ENCODE measurements at regions of chr1 and their contacts with region 1.

Region 1: DNA sequence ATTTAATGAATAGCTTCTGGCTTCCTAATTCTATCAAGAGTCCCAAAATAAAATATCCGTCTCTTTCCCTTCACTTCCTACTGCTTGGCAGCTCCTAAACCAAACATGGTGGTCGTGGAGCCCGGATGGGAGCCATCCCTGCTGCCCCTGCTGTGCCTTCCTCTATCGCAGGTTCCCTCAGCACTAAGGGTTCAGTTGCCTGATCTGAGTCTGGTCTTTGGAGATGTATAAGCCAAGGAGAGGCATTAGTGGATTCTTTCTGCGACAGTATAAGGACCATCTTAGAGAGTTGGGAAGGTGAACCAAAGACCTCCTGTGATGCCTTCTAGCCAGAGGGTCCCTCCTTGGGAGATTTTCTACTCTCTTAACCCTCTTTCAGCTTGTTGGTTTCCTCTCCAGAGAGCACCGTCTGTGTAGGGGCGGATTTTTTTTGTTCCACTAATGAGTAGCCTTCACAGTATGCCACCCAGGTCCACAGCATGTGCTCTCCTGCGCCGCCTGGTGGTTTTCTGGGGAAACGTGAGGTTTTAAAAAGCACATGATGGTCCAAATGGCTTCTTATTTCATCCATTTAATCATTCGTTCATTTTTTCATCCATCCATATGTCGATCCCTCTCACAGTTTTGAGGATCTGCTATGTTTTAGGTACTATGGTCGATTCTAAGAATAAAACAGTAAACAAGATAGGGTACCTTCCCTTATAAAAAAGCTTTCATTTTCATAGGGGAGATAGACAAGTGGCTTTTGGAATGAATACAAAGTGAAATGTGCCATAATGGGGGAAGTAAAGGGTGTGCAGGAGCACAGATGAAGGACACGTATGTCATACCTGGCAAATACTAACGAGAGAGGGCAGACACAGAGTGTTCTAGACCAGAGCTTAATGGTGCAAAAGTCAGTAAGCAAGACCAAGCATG is 71.0 kb downstream of the NFASC start:
- DNase-seq: peak; percentile 83
- H3K4me3 Mint-ChIP-seq: no peak overlapping the region
- H3K27ac Mint-ChIP-seq: no peak overlapping the region
- H3K4me1 Mint-ChIP-seq: no peaks in the 10 kb centered on the region
- H3K27me3 Mint-ChIP-seq: peaks cover 6% of the 10 kb centered on the region

Region 2: GRCh38 chr1:204826970-204827369 is 114.7 kb before region 1 on chr1:
- CTCF ChIA-PET with region 1: interaction called, 3 read pairs
- intact Hi-C with region 1: loop called (anchors 1 kb)
- DNase-seq: peak; percentile 59
- H3K4me3 Mint-ChIP-seq: no peak overlapping the region
- H3K27ac Mint-ChIP-seq: no peak overlapping the region
- H3K4me1 Mint-ChIP-seq: peaks cover 5% of the 10 kb centered on the region
- H3K27me3 Mint-ChIP-seq: peaks cover 33% of the 10 kb centered on the region

Region 3: GRCh38 chr1:204896787-204897469 is 44.8 kb before region 1 on chr1:
- CTCF ChIA-PET with region 1: interaction called, 10 read pairs
- intact Hi-C with region 1: no loop called
- DNase-seq: no peak
- H3K4me3 Mint-ChIP-seq: no peak overlapping the region
- H3K27ac Mint-ChIP-seq: no peak overlapping the region
- H3K4me1 Mint-ChIP-seq: no peaks in the 10 kb centered on the region
- H3K27me3 Mint-ChIP-seq: peaks cover 15% of the 10 kb centered on the region

Region 4: GRCh38 chr1:204924013-204924967 is 17.4 kb before region 1 on chr1:
- CTCF ChIA-PET with region 1: interaction called, 11 read pairs
- intact Hi-C with region 1: no loop called
- DNase-seq: no peak
- H3K4me3 Mint-ChIP-seq: no peak overlapping the region
- H3K27ac Mint-ChIP-seq: no peak overlapping the region
- H3K4me1 Mint-ChIP-seq: no peaks in the 10 kb centered on the region
- H3K27me3 Mint-ChIP-seq: peaks cover 3% of the 10 kb centered on the region

Region 5: DNA sequence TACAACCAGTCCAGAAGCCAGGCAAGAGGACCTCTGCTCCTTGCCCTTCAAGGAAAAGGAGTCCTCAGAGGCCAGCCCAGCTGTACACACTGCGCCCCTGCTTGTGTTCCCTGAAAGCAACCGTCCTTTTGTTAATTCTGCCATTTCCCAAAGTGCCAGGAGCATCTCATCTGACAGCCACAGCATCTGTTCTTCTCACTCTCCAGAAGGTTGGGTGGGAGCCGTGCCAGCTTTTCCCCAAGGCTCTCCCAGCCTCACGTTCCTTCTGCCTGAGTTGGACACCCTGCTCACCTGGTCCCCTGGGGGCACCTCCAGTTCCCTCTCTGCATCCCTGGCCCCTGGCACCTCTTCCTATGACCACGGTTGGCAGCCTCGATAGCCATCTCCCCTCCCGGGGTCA is 90.8 kb after region 1 on chr1:
- CTCF ChIA-PET with region 1: no interaction called
- intact Hi-C with region 1: no loop called
- DNase-seq: no peak
- H3K4me3 Mint-ChIP-seq: no peak overlapping the region
- H3K27ac Mint-ChIP-seq: no peak overlapping the region
- H3K4me1 Mint-ChIP-seq: no peaks in the 10 kb centered on the region
- H3K27me3 Mint-ChIP-seq: no peaks in the 10 kb centered on the region

Region 6: DNA sequence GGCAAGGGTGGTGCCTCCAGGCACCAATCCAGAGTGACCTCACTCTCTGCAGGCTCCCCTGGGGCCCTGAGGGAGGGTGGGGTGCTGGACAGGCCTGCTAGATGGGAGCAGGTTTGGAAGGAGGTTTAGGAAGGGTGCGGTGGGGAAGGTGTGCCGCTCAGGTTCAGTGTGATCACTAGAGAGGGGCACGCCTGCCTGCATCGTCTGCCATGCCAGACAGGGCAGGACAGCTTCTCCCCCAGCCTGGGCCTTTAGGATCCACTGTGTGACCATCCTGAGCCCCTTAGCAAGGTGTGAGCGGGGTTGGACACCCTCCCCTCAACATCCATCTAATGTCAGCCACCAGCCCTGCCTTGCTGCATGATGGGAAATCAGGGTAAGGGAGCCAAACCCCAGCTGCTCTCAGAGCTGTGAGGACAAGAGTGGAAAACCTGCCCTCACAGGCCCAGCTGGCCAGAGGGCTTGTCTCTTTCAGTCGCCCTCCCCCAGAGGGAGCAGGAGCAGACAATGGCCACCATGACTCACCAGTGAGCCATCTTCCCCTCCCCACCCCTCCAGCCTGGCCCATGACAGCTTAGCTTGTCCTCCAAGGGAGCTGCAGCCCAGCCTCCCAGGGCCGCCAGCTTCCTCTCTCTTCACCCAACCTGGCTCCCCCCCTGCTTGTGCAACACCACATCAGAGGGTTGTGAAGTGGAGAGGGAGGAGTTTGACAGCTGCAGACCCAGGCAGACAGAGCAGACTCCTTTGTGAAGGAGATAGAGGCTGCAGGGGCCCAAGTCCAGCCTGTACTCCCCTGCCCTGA is 342.9 kb after region 1 on chr1:
- CTCF ChIA-PET with region 1: no interaction called
- intact Hi-C with region 1: no loop called
- DNase-seq: peak; percentile 97
- H3K4me3 Mint-ChIP-seq: peak overlapping the region; percentile 29
- H3K27ac Mint-ChIP-seq: peak overlapping the region; percentile 87
- H3K4me1 Mint-ChIP-seq: peaks cover 77% of the 10 kb centered on the region
- H3K27me3 Mint-ChIP-seq: no peaks in the 10 kb centered on the region

Measured in activated naive CD4-positive, alpha-beta T cell treated with anti-CD3 and anti-CD28 coated beads for 36 hours (primary cell).